Esophagus muscularis mucosa (tissue), 4 donors: ENCODE measurements at regions of chr16 and their contacts with region 1.

Region 1: DNA sequence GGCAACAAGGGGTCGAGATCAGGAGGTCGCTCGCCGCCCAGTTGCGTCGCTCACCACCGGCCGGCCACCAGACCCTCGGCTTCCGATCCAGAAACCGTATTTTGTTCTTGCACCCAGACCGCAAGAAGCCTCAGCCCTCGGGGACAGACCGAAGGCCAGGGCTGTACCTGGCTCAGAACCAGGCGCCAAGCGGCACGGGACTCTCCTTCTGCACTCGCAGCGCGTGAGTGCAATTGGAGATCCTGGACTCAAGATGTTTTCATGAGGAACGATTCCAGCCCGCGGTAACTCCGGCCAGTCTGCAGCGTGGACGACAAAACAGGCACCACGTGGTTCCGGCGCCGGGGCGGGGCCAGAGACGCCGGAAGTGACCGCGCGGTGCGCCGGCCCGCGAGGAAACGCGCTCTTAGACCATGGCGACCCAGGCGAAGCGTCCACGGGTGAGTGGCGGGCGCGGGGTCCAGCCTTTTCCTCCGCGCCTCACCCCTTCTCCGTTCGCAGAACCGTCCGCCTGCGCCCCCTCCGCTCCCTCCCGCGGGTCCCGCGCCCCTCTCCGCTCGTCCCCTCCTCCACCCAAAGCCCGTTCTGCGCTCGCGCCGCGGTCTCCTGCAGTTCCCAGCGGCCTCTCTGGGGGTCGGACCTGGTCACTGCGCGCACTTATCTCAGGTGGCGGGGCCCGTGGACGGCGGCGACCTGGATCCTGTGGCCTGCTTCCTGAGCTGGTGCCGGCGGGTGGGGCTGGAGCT is at the start of gene SETD6:
- DNase-seq: peak; percentile 97
- H3K4me3 ChIP-seq: peak within 1 kb of the TSS; percentile 90 to 97 (median 92)
- H3K27ac ChIP-seq: peak within 1 kb of the TSS; percentile 83 to 93 (median 86)
- H3K4me1 ChIP-seq: peaks cover 15 to 31% (median 20%) of the 10 kb centered on the region in 4 donors
- H3K27me3 ChIP-seq: no peaks in the 10 kb centered on the region
- CTCF ChIP-seq: peak in 2 of 3 experiments; percentile 9 to 42
- EP300 ChIP-seq: no peak
- POLR2A ChIP-seq: no peak
- total RNA-seq, gene SETD6: 18.2 to 27.5 (median 22.0) TPM

Region 2: DNA sequence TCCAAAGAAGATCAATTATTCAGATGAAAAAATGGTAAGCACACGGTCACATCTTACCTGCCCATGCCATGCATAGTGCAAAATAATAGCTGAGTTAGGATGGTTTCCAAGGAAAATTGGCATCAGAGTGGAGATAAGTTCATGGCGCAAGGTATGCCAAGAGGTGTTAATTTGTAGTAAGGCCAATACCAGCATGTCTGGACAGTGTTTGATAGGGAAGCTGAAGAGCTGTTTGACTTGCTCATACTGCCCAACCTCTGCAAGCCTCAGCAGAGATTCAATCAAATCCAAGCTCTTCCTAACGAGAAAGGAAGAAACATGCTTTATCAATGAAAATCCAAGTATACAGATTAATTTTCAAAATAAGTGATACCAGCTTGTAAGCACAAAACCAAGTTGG is 63.3 kb after region 1 on chr16:
- intact Hi-C with region 1: loop called (anchors 10 kb)
- DNase-seq: no peak
- H3K4me3 ChIP-seq: no peak overlapping the region
- H3K27ac ChIP-seq: no peak overlapping the region
- H3K4me1 ChIP-seq: no peaks in the 10 kb centered on the region
- H3K27me3 ChIP-seq: no peaks in the 10 kb centered on the region
- CTCF ChIP-seq: no peak
- EP300 ChIP-seq: no peak
- POLR2A ChIP-seq: no peak

Region 3: GRCh38 chr16:58629572-58630104 is 114.3 kb after region 1 on chr16 and contains the start of gene CNOT1:
- intact Hi-C with region 1: loop called (anchors 5 kb)
- DNase-seq: peak; percentile 100
- H3K4me3 ChIP-seq: peak within 1 kb of the TSS; percentile 80 to 99 (median 84)
- H3K27ac ChIP-seq: peak within 1 kb of the TSS; percentile 93 to 99 (median 98)
- H3K4me1 ChIP-seq: peaks cover 32 to 39% (median 36%) of the 10 kb centered on the region in 4 donors
- H3K27me3 ChIP-seq: no peaks in the 10 kb centered on the region
- CTCF ChIP-seq: peak in 1 of 3 experiments; percentile 42
- EP300 ChIP-seq: no peak
- POLR2A ChIP-seq: no peak
- total RNA-seq, gene CNOT1: 92.1 to 97.6 (median 95.6) TPM

Region 4: GRCh38 chr16:58661199-58661830 is 146.0 kb after region 1 on chr16:
- intact Hi-C with region 1: loop called (anchors 5 kb)
- DNase-seq: no peak
- H3K4me3 ChIP-seq: no peak overlapping the region
- H3K27ac ChIP-seq: no peak overlapping the region
- H3K4me1 ChIP-seq: peaks cover 0 to 6% (median 0%) of the 10 kb centered on the region in 4 donors
- H3K27me3 ChIP-seq: no peaks in the 10 kb centered on the region
- CTCF ChIP-seq: peak; percentile 48 to 62 (median 60)
- EP300 ChIP-seq: no peak
- POLR2A ChIP-seq: no peak

Region 5: GRCh38 chr16:58755989-58756649 is 240.8 kb after region 1 on chr16:
- intact Hi-C with region 1: loop called (anchors 5 kb)
- DNase-seq: no peak
- H3K4me3 ChIP-seq: no peak overlapping the region
- H3K27ac ChIP-seq: no peak overlapping the region
- H3K4me1 ChIP-seq: peaks cover 0 to 3% (median 1%) of the 10 kb centered on the region in 4 donors
- H3K27me3 ChIP-seq: no peaks in the 10 kb centered on the region
- CTCF ChIP-seq: peak; percentile 61 to 77 (median 68)
- EP300 ChIP-seq: no peak
- POLR2A ChIP-seq: no peak